ENCODE measurements at regions of chr1 and their contacts with region 1.

Region 1: GRCh38 chr1:226626577-226626956 is 78.0 kb downstream of the STUM start:
- DNase-seq: peak; percentile 80
- H3K4me3 ChIP-seq: no peak overlapping the region; a peak in 1 of 4 replicates
- H3K27ac ChIP-seq: no peak overlapping the region
- H3K4me1 ChIP-seq: no peaks in the 10 kb centered on the region; a peak in 1 of 4 replicates
- H3K27me3 ChIP-seq: no peaks in the 10 kb centered on the region
- CTCF ChIP-seq: peak; percentile 93
- EP300 ChIP-seq: no peak
- RAD21 ChIP-seq: peak; percentile 69

Region 2: DNA sequence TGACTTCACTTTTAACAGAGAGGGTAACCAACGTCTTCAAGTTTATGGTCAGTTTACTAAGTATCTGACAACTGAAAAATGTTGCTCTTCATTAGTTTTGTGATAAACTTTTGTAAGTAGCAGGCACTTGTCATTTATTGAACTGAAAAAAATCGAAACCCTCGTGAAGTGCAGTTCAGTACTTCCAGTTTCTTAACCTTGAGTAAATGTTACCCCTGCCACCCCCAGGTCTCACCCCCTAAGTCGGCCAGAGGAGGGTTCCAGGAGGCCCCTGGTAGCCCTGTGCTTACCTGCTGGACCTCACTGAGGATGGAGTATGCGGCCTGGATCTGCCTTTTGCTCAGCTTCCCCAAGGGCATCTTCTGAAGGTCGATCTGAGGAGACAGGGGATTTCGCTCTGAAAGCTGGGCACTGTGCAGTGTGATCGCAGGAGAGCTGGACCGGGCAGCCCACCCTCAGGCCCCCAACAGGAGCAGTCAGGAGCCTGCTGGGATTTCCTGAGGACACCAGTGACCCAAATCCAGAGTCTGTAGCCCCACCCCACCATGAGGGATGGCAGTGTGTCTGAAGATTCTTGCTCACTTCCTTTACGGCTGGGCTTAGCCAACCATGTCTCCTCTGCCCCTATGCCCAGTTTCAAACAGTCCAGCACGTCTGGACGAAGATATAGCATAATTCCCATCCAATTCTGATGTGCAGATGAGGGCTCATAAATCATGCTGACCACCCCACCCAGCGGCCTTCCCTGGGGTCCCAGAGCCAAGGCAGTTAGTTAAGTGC is 256.2 kb before region 1 on chr1:
- CTCF ChIA-PET with region 1: no interaction called
- POLR2A ChIA-PET with region 1: no interaction called
- DNase-seq: no peak
- H3K4me3 ChIP-seq: no peak overlapping the region
- H3K27ac ChIP-seq: no peak overlapping the region
- H3K4me1 ChIP-seq: peaks cover 4 to 15% of the 10 kb centered on the region in 2 experiments; a peak in 3 of 4 replicates
- H3K27me3 ChIP-seq: no peaks in the 10 kb centered on the region
- CTCF ChIP-seq: no peak
- EP300 ChIP-seq: no peak
- RAD21 ChIP-seq: no peak

Region 3: DNA sequence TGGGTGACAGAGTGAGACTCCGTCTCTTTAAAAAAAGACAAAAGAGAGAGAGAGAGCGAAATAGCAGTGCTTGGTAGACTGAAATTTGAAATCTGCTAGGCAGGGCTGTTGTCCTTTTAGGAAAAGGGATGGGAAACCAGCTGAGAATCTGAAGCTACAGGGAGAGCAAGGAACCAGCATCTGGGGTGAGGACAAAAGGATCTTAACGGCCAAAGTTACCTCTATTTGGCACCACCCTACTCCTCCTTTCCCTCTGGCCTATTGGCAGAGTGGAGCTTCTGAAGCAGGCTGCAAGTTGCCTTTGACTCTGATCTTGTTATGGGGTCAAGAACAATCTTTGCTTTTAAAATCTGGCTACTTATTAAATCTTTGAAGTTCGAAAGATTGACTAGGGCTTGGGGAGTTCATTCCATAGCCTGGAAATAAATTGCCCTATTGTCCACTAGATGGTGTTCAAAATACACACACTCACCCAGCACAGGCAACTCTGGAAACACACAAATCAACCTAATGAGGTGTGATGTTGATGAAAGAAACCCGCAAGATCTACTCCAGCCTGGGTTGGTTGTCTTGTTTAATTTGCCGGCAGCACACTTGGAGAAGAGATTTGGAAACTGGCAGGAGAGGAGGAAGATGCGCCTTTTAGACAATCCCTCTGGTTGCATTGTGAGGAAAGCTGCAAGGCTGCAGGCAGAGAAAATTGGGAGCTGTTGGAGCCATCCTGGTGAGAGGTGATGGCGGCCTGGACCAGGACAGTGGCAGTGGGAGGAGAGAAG is 202.2 kb before region 1 on chr1:
- CTCF ChIA-PET with region 1: interaction called, 11 read pairs
- POLR2A ChIA-PET with region 1: interaction called, 6 read pairs
- DNase-seq: peak; percentile 64
- H3K4me3 ChIP-seq: no peak overlapping the region; a peak in 1 of 4 replicates
- H3K27ac ChIP-seq: no peak overlapping the region
- H3K4me1 ChIP-seq: peaks cover 0 to 6% of the 10 kb centered on the region in 2 experiments; a peak in 2 of 4 replicates
- H3K27me3 ChIP-seq: no peaks in the 10 kb centered on the region
- CTCF ChIP-seq: peak; percentile 60
- EP300 ChIP-seq: no peak
- RAD21 ChIP-seq: peak; percentile 80

Region 4: GRCh38 chr1:226608699-226609505 is 17.7 kb before region 1 on chr1:
- CTCF ChIA-PET with region 1: interaction called, 10 read pairs
- POLR2A ChIA-PET with region 1: no interaction called
- DNase-seq: peak; percentile 84
- H3K4me3 ChIP-seq: no peak overlapping the region; a peak in 1 of 4 replicates
- H3K27ac ChIP-seq: no peak overlapping the region
- H3K4me1 ChIP-seq: no peaks in the 10 kb centered on the region; a peak in 1 of 4 replicates
- H3K27me3 ChIP-seq: no peaks in the 10 kb centered on the region; the same call in 1 of the 2 replicates
- CTCF ChIP-seq: peak; percentile 81
- EP300 ChIP-seq: no peak
- RAD21 ChIP-seq: peak; percentile 65

Region 5: DNA sequence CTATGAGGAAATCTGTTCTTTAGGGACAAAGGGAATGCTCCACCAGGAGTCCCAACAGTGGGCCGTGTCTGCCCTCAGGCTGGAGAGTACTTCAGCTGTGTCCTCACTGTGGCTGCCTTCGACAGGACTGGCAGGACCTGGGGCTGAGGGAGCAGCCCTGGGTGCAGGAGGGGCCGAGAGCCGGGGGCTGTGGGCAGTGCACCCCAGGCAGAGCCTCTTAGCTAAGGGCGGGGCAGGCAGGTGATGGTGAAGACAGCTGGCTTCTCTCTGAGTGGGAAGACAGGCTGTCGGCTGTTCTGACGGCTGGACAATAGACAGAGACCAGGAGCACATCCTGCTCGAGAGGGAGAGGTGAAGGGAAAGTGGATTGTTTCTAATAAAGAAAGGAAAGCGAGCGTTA is 13.7 kb after region 1 on chr1:
- CTCF ChIA-PET with region 1: interaction called, 18 read pairs
- POLR2A ChIA-PET with region 1: no interaction called
- DNase-seq: no peak
- H3K4me3 ChIP-seq: no peak overlapping the region
- H3K27ac ChIP-seq: no peak overlapping the region
- H3K4me1 ChIP-seq: peaks cover 0 to 5% of the 10 kb centered on the region in 2 experiments; a peak in 1 of 4 replicates
- H3K27me3 ChIP-seq: no peaks in the 10 kb centered on the region
- CTCF ChIP-seq: no peak
- EP300 ChIP-seq: no peak
- RAD21 ChIP-seq: no peak

Region 6: DNA sequence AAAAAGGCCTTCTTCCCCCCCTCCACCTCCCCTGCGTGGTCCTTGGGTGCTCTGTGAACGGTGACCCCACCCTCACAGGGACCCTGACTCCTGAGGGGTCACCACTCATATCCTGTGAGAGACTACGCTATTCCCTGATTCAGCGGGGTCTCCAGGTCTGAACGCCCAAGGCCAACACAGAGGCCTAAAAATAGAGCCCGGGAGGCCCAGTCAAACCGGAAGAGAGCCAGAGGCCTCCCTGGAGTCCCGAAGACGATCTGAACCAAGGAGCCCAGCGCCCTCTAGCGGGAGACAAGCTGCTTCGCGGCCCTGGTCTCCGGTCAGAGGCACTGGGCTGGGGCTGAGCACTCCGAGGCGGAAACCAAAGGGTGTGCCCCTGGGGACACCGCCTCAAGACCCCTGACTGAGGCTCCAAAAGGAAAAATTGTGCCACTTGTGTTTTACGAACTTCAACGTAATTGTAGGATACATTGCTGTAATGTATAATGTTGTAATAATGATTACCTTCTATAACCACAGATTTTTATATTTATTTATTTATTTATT is 201.5 kb after region 1 on chr1:
- CTCF ChIA-PET with region 1: interaction called, 120 read pairs
- POLR2A ChIA-PET with region 1: no interaction called
- DNase-seq: peak; percentile 88
- H3K4me3 ChIP-seq: peak overlapping the region in 1 of 2 experiments; percentile 16; a peak in 1 of 4 replicates
- H3K27ac ChIP-seq: no peak overlapping the region
- H3K4me1 ChIP-seq: peaks cover 0 to 2% of the 10 kb centered on the region in 2 experiments; a peak in 1 of 4 replicates
- H3K27me3 ChIP-seq: no peaks in the 10 kb centered on the region; the same call in 1 of the 2 replicates
- CTCF ChIP-seq: peak; percentile 92
- EP300 ChIP-seq: no peak
- RAD21 ChIP-seq: peak; percentile 93

Region 7: GRCh38 chr1:226846801-226847200 is 220.2 kb after region 1 on chr1:
- CTCF ChIA-PET with region 1: interaction called, 10 read pairs
- POLR2A ChIA-PET with region 1: no interaction called
- DNase-seq: no peak
- H3K4me3 ChIP-seq: no peak overlapping the region
- H3K27ac ChIP-seq: no peak overlapping the region
- H3K4me1 ChIP-seq: no peaks in the 10 kb centered on the region
- H3K27me3 ChIP-seq: no peaks in the 10 kb centered on the region
- CTCF ChIP-seq: no peak
- EP300 ChIP-seq: no peak
- RAD21 ChIP-seq: no peak